ENCODE measurements at regions of chr10 and their contacts with region 1.

Region 1: DNA sequence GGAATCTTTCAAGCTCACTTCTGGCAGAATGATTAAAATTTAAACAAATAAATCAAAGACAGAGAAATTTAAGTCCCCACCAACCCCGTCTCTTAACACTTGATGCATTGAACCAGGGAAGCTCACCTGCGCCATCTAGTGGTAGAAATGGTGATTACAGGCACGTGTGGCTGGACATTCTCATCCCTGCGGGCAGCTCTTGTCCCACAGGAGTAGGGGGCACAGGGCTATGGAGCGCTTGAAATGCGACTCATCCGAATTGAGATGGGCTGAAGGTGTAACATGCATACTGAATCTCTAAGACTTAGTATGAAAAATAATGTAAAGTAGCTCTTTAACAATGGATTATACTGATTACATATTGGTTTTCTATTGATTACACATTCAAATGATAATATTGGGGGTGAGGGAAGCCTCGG is 24.8 kb upstream of the SLIT1 start:
- DNase-seq: peak; percentile 44
- H3K4me3 ChIP-seq: no peak overlapping the region
- H3K27ac ChIP-seq: no peak overlapping the region
- H3K27me3 ChIP-seq: peaks cover 7% of the 10 kb centered on the region
- CTCF ChIP-seq: peak; percentile 96

Region 2: GRCh38 chr10:97037365-97038361 is 172.9 kb before region 1 on chr10:
- CTCF ChIA-PET with region 1: interaction called, 34 read pairs
- POLR2A ChIA-PET with region 1: no interaction called
- DNase-seq: peak; percentile 54
- H3K4me3 ChIP-seq: peak overlapping the region; percentile 56
- H3K27ac ChIP-seq: no peak overlapping the region
- H3K27me3 ChIP-seq: peaks cover 24% of the 10 kb centered on the region
- CTCF ChIP-seq: peak; percentile 87

Region 3: DNA sequence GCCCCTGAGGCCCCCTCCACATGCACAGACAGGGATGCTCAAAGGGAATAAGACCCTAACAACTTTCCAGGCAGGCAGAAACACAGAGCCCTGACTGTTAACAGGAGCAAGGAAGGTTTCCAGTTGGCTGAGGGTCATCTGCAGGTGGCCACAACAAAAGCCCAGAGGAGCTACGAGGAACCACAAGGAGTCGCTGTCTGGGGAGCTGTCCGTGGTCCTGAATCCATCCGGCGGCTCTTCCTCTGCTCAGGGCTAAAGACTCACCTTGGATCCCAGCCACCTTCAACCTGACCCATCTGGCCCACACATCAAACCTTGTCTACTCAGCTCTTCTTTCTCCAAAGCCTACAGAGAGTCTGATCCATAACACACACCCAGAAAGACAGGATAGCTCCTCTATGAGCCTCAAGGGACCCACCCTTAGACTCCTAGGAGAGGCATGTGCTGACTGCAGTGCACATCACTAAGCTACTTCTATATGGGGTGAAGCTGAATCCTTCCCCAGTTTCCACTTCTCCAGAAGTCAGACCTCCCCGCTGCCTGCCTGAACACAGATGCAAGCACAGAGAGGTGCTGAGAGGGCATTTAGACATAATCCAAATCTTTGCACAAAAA is 128.8 kb before region 1 on chr10:
- CTCF ChIA-PET with region 1: interaction called, 327 read pairs
- POLR2A ChIA-PET with region 1: no interaction called
- DNase-seq: peak; percentile 29
- H3K4me3 ChIP-seq: no peak overlapping the region
- H3K27ac ChIP-seq: no peak overlapping the region
- H3K27me3 ChIP-seq: peaks cover 14% of the 10 kb centered on the region
- CTCF ChIP-seq: peak; percentile 96

Region 4: DNA sequence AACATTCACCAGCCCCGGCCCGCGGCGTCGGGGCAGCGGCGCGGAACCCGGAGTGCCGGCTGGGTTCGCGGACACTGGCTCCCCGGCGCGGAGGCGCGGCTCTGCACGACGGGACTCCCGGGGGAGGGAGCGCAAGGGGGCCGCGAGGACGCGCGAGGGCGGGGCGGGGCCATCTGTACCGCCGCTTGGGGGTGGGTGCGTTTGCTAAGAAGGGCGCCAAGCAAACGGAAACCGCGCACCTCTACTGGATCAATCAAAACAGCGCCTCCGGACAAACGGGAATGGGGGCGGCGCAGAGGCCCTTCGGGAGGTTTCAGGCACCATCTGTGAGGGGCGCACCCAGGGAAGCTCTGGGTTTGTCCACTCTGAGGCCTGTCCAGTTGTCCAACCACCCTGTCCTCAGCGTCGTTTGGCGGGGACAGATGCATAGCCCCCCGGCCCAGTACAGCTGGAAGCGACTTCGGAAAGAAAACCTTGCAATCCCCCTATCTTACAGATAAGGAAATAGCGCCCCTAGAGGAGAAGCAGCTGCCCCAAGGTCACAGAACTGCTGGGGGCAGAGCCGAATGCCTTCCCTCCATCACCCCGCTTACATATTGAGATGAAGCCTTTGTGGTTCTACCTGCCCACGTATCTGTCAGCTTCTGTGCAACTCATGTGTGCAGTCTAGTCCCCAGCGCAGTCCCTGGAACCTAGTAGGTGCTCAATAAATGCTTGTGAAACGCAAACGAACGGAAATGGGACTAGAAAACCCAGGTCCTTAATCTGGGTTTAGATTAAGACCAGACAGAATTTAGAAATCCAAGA is 14.1 kb before region 1 on chr10:
- CTCF ChIA-PET with region 1: interaction called, 93 read pairs
- POLR2A ChIA-PET with region 1: no interaction called
- DNase-seq: peak; percentile 10
- H3K4me3 ChIP-seq: peak overlapping the region; percentile 61
- H3K27ac ChIP-seq: no peak overlapping the region
- H3K27me3 ChIP-seq: peaks cover 29% of the 10 kb centered on the region
- CTCF ChIP-seq: peak; percentile 83

Region 5: DNA sequence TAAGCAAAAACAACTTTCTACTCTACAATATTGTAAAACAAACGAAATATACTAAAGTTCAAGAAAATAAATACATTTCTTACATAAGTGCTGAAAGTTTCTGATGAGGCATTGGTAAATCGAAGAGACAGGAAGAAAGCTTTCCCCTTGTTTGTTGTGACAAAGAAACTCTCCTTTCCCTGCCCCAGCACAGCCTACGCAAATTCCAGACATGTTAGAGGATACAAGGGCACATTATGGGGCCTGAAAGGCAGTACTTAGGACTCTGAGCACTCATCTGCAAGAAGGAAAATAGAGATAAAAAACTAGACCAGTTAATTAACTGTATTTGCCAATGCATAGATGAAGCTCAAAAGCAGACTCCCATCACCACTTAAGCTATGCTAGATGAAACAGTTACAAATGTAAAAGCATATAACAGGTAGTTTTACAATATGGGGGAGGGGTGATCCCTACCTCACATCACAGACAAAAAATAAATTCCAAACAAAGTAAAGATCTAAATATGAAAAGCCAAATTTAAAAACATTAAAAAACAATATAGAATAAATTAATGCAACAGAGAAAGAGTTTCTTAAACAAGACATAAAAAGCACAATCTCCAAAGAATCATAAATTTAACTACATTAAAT is 60.1 kb after region 1 on chr10:
- CTCF ChIA-PET with region 1: interaction called, 12 read pairs
- POLR2A ChIA-PET with region 1: no interaction called
- DNase-seq: peak; percentile 36
- H3K4me3 ChIP-seq: no peak overlapping the region
- H3K27ac ChIP-seq: no peak overlapping the region
- H3K27me3 ChIP-seq: no peaks in the 10 kb centered on the region
- CTCF ChIP-seq: no peak

Region 6: DNA sequence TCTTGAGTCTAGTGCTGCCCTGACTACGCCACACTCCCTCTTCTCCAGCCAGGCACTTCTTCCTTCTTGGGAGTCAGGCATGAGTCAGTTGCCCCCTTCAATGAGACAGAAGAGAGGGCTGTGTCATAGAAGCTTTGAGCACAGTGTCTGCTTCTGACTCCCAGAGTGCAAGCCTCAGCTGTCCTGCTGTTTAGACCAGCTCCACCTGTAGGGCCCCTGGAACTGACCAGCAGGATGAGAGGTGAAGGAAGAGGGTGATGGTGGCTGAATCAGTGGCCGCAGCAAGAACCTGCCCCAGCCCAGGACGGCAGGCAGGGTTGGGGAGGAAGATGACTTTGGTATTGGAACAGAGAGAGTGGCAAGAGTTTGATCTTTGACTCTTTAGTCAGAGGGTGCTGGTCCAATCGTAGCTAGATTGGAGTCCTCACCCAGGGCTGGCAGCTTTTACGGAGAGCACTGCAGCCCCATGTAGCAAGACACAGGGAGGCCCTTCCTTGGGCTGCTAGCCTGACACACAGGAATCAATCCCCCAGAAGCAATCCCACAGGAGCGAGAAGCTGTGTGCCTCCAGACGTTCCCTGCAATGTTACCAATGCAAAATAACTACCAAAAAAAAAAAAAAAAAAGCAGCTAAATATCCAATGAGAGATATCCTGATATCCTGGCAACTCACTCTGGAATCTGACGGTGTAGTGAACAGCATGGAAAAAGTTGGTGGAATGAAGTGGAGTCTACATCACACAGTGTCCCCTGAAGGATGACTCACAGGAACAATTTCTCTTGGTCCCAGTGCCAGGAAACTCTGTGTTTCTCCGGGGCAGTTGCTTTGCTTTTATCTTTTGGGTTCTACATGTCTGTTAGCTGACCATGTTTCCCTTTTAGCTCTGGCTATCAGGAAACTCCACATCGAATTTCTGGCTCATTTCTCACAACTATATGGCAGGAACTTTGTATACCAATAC is 385.8 kb after region 1 on chr10:
- CTCF ChIA-PET with region 1: no interaction called
- POLR2A ChIA-PET with region 1: no interaction called
- DNase-seq: peak; percentile 15
- H3K4me3 ChIP-seq: no peak overlapping the region
- H3K27ac ChIP-seq: peak overlapping the region; percentile 39
- H3K27me3 ChIP-seq: no peaks in the 10 kb centered on the region
- CTCF ChIP-seq: no peak

Region 7: DNA sequence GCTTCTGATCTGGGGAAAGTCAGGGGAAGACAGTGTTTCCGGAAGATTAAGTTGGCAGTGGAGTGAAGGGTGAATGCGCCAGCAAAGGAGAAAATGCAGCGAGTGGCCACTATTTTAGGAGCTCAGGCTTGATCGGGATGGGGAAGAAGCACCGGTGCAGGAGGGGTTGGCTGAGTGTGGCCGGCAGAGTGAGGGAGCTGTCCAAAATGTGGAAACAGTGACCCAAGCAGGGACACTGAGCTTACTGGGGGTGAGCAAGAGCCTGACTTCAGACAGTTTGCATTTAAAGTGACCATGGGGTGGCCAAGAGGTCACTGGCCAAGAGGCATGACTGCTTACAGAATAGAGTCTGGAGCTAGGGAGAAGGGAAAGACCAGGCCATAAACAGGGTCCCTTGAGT is 718.3 kb after region 1 on chr10:
- CTCF ChIA-PET with region 1: no interaction called
- POLR2A ChIA-PET with region 1: no interaction called
- DNase-seq: no peak
- H3K4me3 ChIP-seq: no peak overlapping the region
- H3K27ac ChIP-seq: no peak overlapping the region
- H3K27me3 ChIP-seq: no peaks in the 10 kb centered on the region
- CTCF ChIP-seq: no peak

Region 8: DNA sequence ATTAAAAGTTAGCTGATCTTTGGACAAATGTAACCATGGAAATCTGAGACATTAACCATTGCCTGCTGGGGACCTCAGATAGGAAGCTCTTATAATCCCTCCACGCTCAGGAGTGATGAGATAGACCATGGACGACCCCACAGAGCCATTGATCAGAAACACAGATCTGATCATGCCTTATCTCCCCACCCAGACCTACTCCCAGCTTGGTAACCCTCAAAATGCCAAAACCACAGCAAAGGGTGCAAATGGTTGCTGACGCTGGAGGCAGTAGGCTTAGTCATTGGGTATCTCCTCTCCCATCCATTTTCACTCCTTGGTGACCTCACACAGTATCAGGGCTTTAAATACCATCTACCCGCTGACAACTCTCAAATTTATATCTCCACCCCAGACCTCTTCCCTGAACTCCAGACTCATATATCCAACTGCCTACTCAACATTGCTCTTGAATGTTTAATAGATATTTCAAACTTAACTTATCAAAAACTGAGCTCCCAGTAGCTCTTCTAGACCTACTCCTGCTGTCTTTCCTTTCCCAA is 759.1 kb after region 1 on chr10:
- CTCF ChIA-PET with region 1: no interaction called
- POLR2A ChIA-PET with region 1: no interaction called
- DNase-seq: no peak
- H3K4me3 ChIP-seq: no peak overlapping the region
- H3K27ac ChIP-seq: no peak overlapping the region
- H3K27me3 ChIP-seq: peaks cover 7% of the 10 kb centered on the region
- CTCF ChIP-seq: no peak

Measured in AG04450 (cell line).